KBM-7 (cell line): ENCODE measurements at regions of chr16 and their contacts with region 1.

Region 1: GRCh38 chr16:84967828-84968227 is 43.5 kb downstream of the ZDHHC7 start:
- DNase-seq: no peak

Region 2: GRCh38 chr16:84754353-84754856 is 213.4 kb before region 1 on chr16:
- in situ Hi-C with region 1: loop called (anchors 10 kb)
- DNase-seq: peak; percentile 93

Region 3: DNA sequence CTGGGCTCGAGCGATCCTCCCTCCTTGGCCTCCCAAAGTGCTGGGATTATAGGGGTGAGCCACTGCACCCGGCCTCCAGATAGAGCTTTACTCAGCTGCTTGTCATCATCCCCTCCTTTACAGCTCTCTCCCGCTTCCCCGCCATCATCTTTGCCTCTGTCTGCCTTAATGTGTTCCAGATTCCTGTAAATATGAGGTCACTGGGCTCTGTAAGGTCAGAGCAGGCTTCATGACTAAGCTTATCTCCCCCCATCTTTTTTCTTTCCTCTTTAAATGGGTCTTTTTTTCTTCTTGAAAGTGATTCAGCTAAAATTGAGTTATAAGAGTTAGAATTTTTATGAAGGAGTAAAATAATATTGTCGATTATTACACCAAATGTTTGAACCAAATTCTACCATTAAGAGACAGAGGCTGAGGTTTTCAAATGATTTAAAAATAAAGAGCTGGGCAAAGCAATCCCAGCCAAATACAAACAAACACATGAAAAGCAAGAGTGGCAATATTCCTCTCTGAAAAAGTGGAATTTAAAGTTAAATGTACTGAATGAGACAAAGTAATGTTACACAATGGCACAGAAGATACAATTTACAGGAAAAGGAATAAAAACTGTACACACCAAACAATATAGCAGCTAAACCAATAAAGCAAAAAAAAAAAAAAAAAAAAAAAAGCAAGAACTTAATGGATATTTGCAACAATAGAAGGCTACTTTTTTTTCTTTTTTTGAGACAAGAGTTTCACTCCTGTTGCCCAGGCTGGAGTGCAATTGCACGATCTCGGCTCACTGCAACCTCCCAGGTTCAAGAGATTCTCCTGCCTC is 85.9 kb before region 1 on chr16:
- in situ Hi-C with region 1: no loop called
- DNase-seq: no peak